ENCODE measurements at regions of chr2 and their contacts with region 1.

Region 1: DNA sequence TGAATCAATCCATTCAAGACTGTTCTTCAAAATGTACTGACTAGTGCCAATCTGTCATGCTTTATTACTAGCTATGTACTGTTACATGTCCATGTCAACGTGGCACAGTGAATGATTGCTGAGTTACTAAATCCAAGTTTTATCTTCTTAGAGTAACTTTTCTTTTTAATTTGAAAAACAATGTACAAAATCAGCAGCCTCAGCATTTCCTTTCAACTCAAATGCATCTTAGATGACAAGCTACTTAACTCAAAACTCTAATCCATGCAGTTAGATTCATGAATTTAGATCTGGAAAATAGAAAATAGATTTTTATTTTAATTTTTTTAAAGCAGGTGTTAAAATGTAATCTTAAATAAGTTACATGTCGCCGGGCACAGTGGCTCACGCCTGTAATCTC is 174.2 kb downstream of the CAPN13 start:
- DNase-seq: no peak
- ATAC-seq: no peak
- H3K4me3 Mint-ChIP-seq: no peak overlapping the region
- H3K27ac Mint-ChIP-seq: no peak overlapping the region
- H3K4me1 Mint-ChIP-seq: peaks cover 18% of the 10 kb centered on the region
- H3K27me3 Mint-ChIP-seq: no peaks in the 10 kb centered on the region
- CTCF ChIP-seq: no peak

Region 2: DNA sequence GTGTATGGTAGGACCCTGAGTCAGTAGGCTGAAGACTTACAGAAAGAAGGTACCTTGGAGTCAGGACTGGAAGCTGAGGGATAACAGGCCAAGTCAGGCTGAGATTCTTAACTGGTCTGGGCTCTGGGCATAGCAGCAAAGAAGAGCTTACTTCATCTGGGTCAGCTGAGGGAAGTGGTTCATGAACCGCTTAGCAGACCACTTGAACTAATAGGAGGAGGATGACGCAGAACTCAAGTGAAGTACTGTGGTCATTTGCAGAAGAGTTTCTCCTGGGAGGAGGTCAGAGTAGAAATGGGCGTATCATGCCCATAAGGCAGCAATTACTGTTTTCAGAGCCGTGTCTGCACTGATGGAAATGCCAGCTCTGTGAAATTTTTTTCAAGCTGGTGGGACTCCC is 21.5 kb before region 1 on chr2:
- CTCF ChIA-PET with region 1: no interaction called
- POLR2A ChIA-PET with region 1: no interaction called
- intact Hi-C with region 1: no loop called
- DNase-seq: no peak
- ATAC-seq: no peak
- H3K4me3 Mint-ChIP-seq: no peak overlapping the region
- H3K27ac Mint-ChIP-seq: no peak overlapping the region
- H3K4me1 Mint-ChIP-seq: peaks cover 29% of the 10 kb centered on the region
- H3K27me3 Mint-ChIP-seq: no peaks in the 10 kb centered on the region
- CTCF ChIP-seq: no peak

Region 3: GRCh38 chr2:30622452-30622851 is 10.6 kb before region 1 on chr2:
- CTCF ChIA-PET with region 1: no interaction called
- POLR2A ChIA-PET with region 1: no interaction called
- intact Hi-C with region 1: loop called (anchors 2 kb)
- DNase-seq: no peak
- ATAC-seq: no peak
- H3K4me3 Mint-ChIP-seq: no peak overlapping the region
- H3K27ac Mint-ChIP-seq: no peak overlapping the region
- H3K4me1 Mint-ChIP-seq: peaks cover 42% of the 10 kb centered on the region
- H3K27me3 Mint-ChIP-seq: no peaks in the 10 kb centered on the region
- CTCF ChIP-seq: no peak